ENCODE measurements at regions of chr7 and their contacts with region 1.

Region 1: GRCh38 chr7:127876393-127876792 is 154.8 kb downstream of the LRRC4 start:
- DNase-seq: no peak
- H3K4me3 Mint-ChIP-seq: no peak overlapping the region
- H3K27ac Mint-ChIP-seq: no peak overlapping the region
- H3K4me1 Mint-ChIP-seq: peaks cover 15% of the 10 kb centered on the region
- H3K27me3 Mint-ChIP-seq: no peaks in the 10 kb centered on the region

Region 2: GRCh38 chr7:127651556-127652332 is 224.6 kb before region 1 on chr7 and contains the start of gene SND1:
- intact Hi-C with region 1: no loop called
- DNase-seq: peak; percentile 99
- H3K4me3 Mint-ChIP-seq: peak within 1 kb of the TSS; percentile 100
- H3K27ac Mint-ChIP-seq: peak within 1 kb of the TSS; percentile 98
- H3K4me1 Mint-ChIP-seq: peaks cover 49% of the 10 kb centered on the region
- H3K27me3 Mint-ChIP-seq: peaks cover 6% of the 10 kb centered on the region
- total RNA-seq, gene SND1: 281 and 292 TPM in 2 replicates

Region 3: GRCh38 chr7:127897704-127898454 is 21.5 kb after region 1 on chr7:
- intact Hi-C with region 1: loop called (anchors 2 kb)
- DNase-seq: no peak
- H3K4me3 Mint-ChIP-seq: no peak overlapping the region
- H3K27ac Mint-ChIP-seq: no peak overlapping the region
- H3K4me1 Mint-ChIP-seq: peaks cover 11% of the 10 kb centered on the region
- H3K27me3 Mint-ChIP-seq: no peaks in the 10 kb centered on the region

Measured in activated T-helper 1 cell treated with anti-CD3 and anti-CD28 coated beads, Interleukin-12 subunit alpha, Interleukin-12 subunit beta, Interleukin-2, Interleukin-4 antibody, amounts not matched to agents 30 ng/mL and 10 ng/mL and 1 ng/mL, durations not matched to agents 14 hours and 24 hours and 36 hours (primary cell).